ENCODE measurements at regions of chr12 and their contacts with region 1.

Region 1: DNA sequence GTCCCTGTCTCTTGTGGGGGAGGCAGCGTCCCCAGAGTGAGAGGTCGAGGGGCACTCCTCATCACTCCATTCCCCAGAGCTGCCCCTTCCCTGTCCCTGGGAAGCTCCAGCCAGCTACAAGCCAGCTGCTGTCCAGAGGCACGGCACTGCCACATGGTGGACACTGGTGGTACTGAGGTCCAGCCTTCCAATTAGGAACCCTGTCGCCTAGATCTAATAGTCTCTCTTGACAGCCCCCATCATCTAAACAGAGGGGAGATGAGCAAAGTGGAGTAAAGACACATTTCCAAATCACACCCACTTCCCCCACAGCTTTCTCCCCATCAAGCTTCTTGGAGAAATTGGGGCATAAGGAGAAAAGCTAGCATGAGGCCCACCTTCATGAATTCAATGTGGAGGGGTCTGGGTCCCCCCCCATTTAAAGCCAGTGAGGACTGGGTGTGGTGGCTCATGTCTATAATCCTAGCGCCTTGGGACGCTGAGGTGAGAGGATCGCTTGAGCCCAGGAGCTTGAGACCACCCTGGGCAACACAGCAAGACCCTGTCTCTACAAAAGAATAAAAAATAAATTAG is 2.1 kb upstream of the INHBE start:
- DNase-seq: peak; percentile 61 to 89 (median 86)
- H3K4me3 ChIP-seq: peak overlapping the region in 1 of 59 donors; percentile 2
- H3K27ac ChIP-seq: peak overlapping the region in 51 of 59 donors; percentile 21 to 89 (median 76)
- H3K27me3 ChIP-seq: no peaks in the 10 kb centered on the region
- CTCF ChIP-seq: peak; percentile 79 to 97 (median 92)

Region 2: GRCh38 chr12:56510786-56511185 is 942.2 kb before region 1 on chr12:
- intact Hi-C with region 1: no loop called
- DNase-seq: no peak
- H3K4me3 ChIP-seq: no peak overlapping the region
- H3K27ac ChIP-seq: no peak overlapping the region
- H3K27me3 ChIP-seq: no peaks in the 10 kb centered on the region
- CTCF ChIP-seq: no peak

Region 3: GRCh38 chr12:57261428-57261865 is 191.6 kb before region 1 on chr12:
- intact Hi-C with region 1: loop called (anchors 2 to 5 kb)
- DNase-seq: peak in 1 of 10 donors; percentile 17
- H3K4me3 ChIP-seq: no peak overlapping the region
- H3K27ac ChIP-seq: peak overlapping the region in 20 of 59 donors; percentile 1 to 65 (median 32)
- H3K27me3 ChIP-seq: no peaks in the 10 kb centered on the region
- CTCF ChIP-seq: no peak

Region 4: GRCh38 chr12:57309420-57309819 is 143.6 kb before region 1 on chr12:
- intact Hi-C with region 1: loop called (anchors 2 to 5 kb)
- DNase-seq: no peak
- H3K4me3 ChIP-seq: no peak overlapping the region
- H3K27ac ChIP-seq: peak overlapping the region in 56 of 59 donors; percentile 3 to 87 (median 70)
- H3K27me3 ChIP-seq: no peaks in the 10 kb centered on the region
- CTCF ChIP-seq: no peak

Measured in dorsolateral prefrontal cortex (tissue), 120 donors.